ENCODE measurements at regions of chr14 and their contacts with region 1.

Region 1: DNA sequence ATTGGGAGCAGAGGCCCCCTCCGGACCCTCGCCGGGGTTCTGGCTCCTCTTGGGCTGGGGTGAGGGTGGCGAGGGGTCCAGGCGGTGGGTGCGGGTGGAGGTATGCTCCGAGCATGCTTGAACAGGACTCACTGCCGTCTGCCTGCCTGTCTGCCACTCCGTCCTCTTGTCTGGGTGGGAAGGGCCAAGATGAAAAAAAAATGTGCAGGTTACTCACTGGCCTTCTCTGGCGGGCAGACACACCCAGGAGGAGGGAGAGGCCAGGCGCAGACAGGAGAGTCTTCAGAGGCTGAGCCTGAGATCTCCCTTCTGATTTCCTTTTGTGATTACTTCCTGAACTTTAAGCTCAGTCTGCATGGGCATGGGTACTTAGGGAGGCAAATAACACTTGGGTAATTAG is 76.1 kb downstream of the STON2 start:
- DNase-seq: peak; percentile 47 to 79
- H3K4me3 ChIP-seq: peak overlapping the region; percentile 76
- H3K27ac ChIP-seq: peak overlapping the region; percentile 59
- H3K4me1 ChIP-seq: peaks cover 19% of the 10 kb centered on the region
- H3K27me3 ChIP-seq: no peaks in the 10 kb centered on the region
- CTCF ChIP-seq: no peak

Region 2: DNA sequence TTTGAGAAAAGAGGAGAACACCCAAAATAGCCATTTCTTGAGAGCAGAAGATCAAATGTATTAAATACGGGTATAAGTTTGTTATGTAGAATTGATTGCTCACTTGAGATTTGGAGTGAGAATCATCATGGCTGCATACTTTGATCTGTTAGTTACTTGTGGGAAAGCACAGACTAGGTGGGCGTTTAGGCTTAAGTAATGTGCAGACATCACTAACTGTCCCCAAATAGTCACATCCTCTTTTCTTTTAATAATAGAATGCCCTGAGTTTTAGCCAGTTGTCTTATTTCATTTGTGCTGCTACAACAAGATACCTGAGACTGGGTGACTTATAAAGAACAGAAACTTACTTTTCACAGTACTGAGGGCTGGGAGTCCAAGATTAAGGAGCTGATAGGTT is 88.9 kb before region 1 on chr14:
- CTCF ChIA-PET with region 1: no interaction called
- POLR2A ChIA-PET with region 1: interaction called, 12 read pairs
- intact Hi-C with region 1: no loop called
- DNase-seq: no peak
- H3K4me3 ChIP-seq: no peak overlapping the region
- H3K27ac ChIP-seq: no peak overlapping the region
- H3K4me1 ChIP-seq: peaks cover 13% of the 10 kb centered on the region; the same call in 1 of the 2 replicates
- H3K27me3 ChIP-seq: no peaks in the 10 kb centered on the region
- CTCF ChIP-seq: no peak

Region 3: DNA sequence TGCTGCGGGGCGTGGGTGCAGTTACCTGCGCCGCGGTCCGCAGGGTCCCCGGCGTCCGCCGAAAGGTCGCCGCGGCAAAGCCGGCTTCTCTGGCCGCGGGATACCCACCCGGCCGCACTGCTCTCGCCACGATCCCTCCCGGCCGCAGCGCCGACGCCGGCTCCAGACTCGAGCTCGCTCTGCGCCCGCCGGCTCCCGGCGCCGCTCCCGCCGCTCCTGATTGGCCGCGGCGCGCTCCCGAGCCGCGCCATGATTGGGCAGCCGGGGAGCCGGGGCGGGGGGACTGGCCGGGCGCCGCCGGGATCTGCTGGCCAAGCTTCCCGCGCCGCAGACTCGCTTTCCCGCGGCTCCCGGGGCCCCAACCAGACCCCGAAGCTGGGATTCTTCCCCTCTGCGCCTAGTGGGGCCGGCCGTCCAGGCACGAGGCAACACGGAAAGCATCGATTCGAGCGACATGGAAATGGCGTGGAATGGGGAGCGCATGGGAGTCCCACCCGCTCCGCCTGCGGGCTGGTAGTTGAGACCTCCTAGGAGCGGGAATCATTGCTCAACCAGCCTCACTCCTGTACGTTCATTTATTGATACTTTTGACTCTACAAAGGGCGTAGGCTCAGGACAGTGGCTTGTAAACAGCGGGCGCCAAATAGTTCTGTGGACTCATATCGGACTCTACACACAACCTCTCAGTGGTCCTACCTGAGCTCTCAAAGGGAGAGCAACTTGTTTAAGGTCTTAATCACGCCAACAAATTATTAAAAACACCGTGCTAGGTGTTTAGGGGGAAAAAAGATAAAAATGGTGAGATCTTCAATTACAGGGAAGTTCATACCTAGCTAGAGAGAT is 112.5 kb after region 1 on chr14:
- CTCF ChIA-PET with region 1: no interaction called
- POLR2A ChIA-PET with region 1: no interaction called
- intact Hi-C with region 1: loop called (anchors 10 kb)
- DNase-seq: peak; percentile 42 to 47
- H3K4me3 ChIP-seq: peak overlapping the region; percentile 67
- H3K27ac ChIP-seq: no peak overlapping the region
- H3K4me1 ChIP-seq: 0 out of 2 replicates have a peak, but pooled peaks cover 4% of the 10 kb centered on the region
- H3K27me3 ChIP-seq: no peaks in the 10 kb centered on the region; the same call in 1 of the 2 replicates
- CTCF ChIP-seq: no peak